ENCODE measurements at regions of chr2 and their contacts with region 1.

Region 1: DNA sequence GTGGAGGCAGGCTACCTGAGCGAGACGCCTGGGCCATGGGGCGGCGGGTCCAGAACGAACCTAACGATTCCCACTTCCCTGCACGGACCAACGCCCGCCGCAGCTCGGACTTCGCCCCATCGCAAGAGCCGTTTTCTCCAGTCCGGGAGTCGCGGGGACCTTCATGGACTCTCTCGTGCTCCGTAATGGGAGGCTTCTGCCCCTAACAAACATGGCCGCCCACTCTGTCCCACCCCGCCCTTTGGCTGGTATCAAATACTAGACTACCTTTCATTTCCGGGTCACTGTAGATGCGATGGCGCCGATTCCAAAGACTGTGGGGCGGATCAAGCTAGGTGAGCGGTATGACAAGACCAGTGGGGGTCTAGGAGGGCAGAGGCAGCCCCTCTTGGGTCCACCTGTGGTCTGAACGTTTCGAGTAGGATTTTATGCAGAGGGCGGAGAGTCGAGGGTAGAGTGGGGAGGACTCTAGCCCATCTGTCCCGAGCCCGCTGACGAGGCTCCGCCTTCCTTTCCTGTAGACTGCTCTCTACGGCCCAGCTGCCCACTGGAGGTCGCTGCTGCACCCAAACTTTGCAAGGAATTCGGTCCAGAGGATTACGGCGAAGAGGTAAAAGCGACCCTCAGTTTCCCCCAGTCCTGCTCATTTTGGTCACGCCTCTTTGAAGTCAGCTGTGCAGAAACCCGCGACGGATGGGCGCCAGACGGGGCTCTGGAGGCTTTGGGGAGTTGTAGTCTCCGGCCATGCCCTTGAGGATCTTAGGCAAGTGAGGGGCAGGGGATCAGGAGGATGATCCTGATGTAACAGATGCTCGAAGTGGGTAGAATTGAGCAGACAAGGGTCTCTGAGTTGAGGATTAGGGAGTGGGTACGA is at the starts of genes CCDC142 and TTC31:
- DNase-seq: peak; percentile 76 to 96 (median 96)
- ATAC-seq: peak; percentile 96
- H3K4me3 ChIP-seq: peak within 1 kb of the TSS; percentile 99
- H3K4me3 Mint-ChIP-seq: peak within 1 kb of the TSS; percentile 91 to 100 (median 98)
- H3K27ac ChIP-seq: peak within 1 kb of the TSS; percentile 85
- H3K27ac Mint-ChIP-seq: peak within 1 kb of the TSS; percentile 93 to 100 (median 99)
- H3K4me1 ChIP-seq: peaks cover 22 to 26% of the 10 kb centered on the region in 2 donors
- H3K4me1 Mint-ChIP-seq: peaks cover 21 to 59% (median 41%) of the 10 kb centered on the region in 7 donors
- H3K27me3 ChIP-seq: no peaks in the 10 kb centered on the region
- H3K27me3 Mint-ChIP-seq: no peaks in the 10 kb centered on the region
- total RNA-seq, gene CCDC142: 21.4 to 75.2 (median 33.8) TPM
- total RNA-seq, gene TTC31: 35.5 to 50.4 (median 43.6) TPM

Region 2: GRCh38 chr2:73759285-73759764 is 723.7 kb before region 1 on chr2:
- CTCF ChIA-PET with region 1: no interaction called
- POLR2A ChIA-PET with region 1: no interaction called
- intact Hi-C with region 1: no loop called
- DNase-seq: no peak
- ATAC-seq: no peak
- H3K4me3 ChIP-seq: no peak overlapping the region
- H3K4me3 Mint-ChIP-seq: no peak overlapping the region
- H3K27ac ChIP-seq: no peak overlapping the region
- H3K27ac Mint-ChIP-seq: peak overlapping the region in 1 of 9 donors; percentile 41
- H3K4me1 ChIP-seq: no peaks in the 10 kb centered on the region
- H3K4me1 Mint-ChIP-seq: peaks cover 0 to 4% (median 0%) of the 10 kb centered on the region in 7 donors
- H3K27me3 ChIP-seq: no peaks in the 10 kb centered on the region
- H3K27me3 Mint-ChIP-seq: no peaks in the 10 kb centered on the region

Region 3: GRCh38 chr2:74391580-74392448 is 91.2 kb before region 1 on chr2:
- CTCF ChIA-PET with region 1: no interaction called
- POLR2A ChIA-PET with region 1: interaction called, 10 read pairs
- intact Hi-C with region 1: loop called in 1 of 2 experiments (anchors 1 kb)
- DNase-seq: peak; percentile 89 to 99 (median 93)
- ATAC-seq: peak; percentile 97
- H3K4me3 ChIP-seq: peak overlapping the region; percentile 78
- H3K4me3 Mint-ChIP-seq: peak overlapping the region in 4 of 10 donors; percentile 40 to 100 (median 92)
- H3K27ac ChIP-seq: peak overlapping the region; percentile 91
- H3K27ac Mint-ChIP-seq: peak overlapping the region in 8 of 9 donors; percentile 98 to 100 (median 99)
- H3K4me1 ChIP-seq: peaks cover 8 to 25% of the 10 kb centered on the region in 2 donors
- H3K4me1 Mint-ChIP-seq: peaks cover 0 to 15% (median 5%) of the 10 kb centered on the region in 7 donors
- H3K27me3 ChIP-seq: no peaks in the 10 kb centered on the region
- H3K27me3 Mint-ChIP-seq: peaks cover 0 to 14% (median 5%) of the 10 kb centered on the region in 5 donors

Region 4: GRCh38 chr2:74472086-74472944 is 10.7 kb before region 1 on chr2 and contains the start of gene MRPL53:
- CTCF ChIA-PET with region 1: interaction called, 15 read pairs
- POLR2A ChIA-PET with region 1: interaction called, 80 read pairs
- intact Hi-C with region 1: loop called (anchors 1 kb)
- DNase-seq: peak; percentile 91 to 98 (median 95)
- ATAC-seq: peak; percentile 96
- H3K4me3 ChIP-seq: peak within 1 kb of the TSS; percentile 89
- H3K4me3 Mint-ChIP-seq: peak within 1 kb of the TSS; percentile 88 to 99 (median 98)
- H3K27ac ChIP-seq: peak within 1 kb of the TSS; percentile 91
- H3K27ac Mint-ChIP-seq: peak within 1 kb of the TSS; percentile 94 to 99 (median 98)
- H3K4me1 ChIP-seq: peaks cover 14 to 19% of the 10 kb centered on the region in 2 donors
- H3K4me1 Mint-ChIP-seq: peaks cover 9 to 32% (median 29%) of the 10 kb centered on the region in 7 donors
- H3K27me3 ChIP-seq: no peaks in the 10 kb centered on the region
- H3K27me3 Mint-ChIP-seq: no peaks in the 10 kb centered on the region
- total RNA-seq, gene MRPL53: 45.7 to 108 (median 94.5) TPM

Region 5: GRCh38 chr2:74544634-74545033 is 61.6 kb after region 1 on chr2:
- CTCF ChIA-PET with region 1: no interaction called
- POLR2A ChIA-PET with region 1: no interaction called
- intact Hi-C with region 1: loop called in 1 of 2 experiments (anchors 1 kb)
- DNase-seq: peak in 1 of 9 donors; percentile 14
- ATAC-seq: no peak
- H3K4me3 ChIP-seq: no peak overlapping the region
- H3K4me3 Mint-ChIP-seq: no peak overlapping the region
- H3K27ac ChIP-seq: no peak overlapping the region
- H3K27ac Mint-ChIP-seq: no peak overlapping the region
- H3K4me1 ChIP-seq: peaks cover 0 to 12% of the 10 kb centered on the region in 2 donors
- H3K4me1 Mint-ChIP-seq: peaks cover 5 to 11% (median 9%) of the 10 kb centered on the region in 7 donors
- H3K27me3 ChIP-seq: peaks cover 9 to 18% of the 10 kb centered on the region in 2 donors
- H3K27me3 Mint-ChIP-seq: peaks cover 39 to 62% (median 52%) of the 10 kb centered on the region in 5 donors

Region 6: GRCh38 chr2:74653985-74654882 is 171.2 kb after region 1 on chr2 and contains the start of gene SEMA4F:
- CTCF ChIA-PET with region 1: no interaction called
- POLR2A ChIA-PET with region 1: no interaction called
- intact Hi-C with region 1: loop called in 1 of 2 experiments (anchors 2 kb)
- DNase-seq: peak; percentile 85 to 95 (median 92)
- ATAC-seq: peak; percentile 100
- H3K4me3 ChIP-seq: peak within 1 kb of the TSS; percentile 86
- H3K4me3 Mint-ChIP-seq: peak within 1 kb of the TSS; percentile 82 to 97 (median 90)
- H3K27ac ChIP-seq: peak within 1 kb of the TSS; percentile 75
- H3K27ac Mint-ChIP-seq: peak within 1 kb of the TSS in 8 of 9 donors; percentile 59 to 96 (median 85)
- H3K4me1 ChIP-seq: peaks cover 6 to 8% of the 10 kb centered on the region in 2 donors
- H3K4me1 Mint-ChIP-seq: peaks cover 12 to 34% (median 23%) of the 10 kb centered on the region in 7 donors
- H3K27me3 ChIP-seq: no peaks in the 10 kb centered on the region
- H3K27me3 Mint-ChIP-seq: peaks cover 3 to 21% (median 5%) of the 10 kb centered on the region in 5 donors
- total RNA-seq, gene SEMA4F: 5.7 to 23.6 (median 11.0) TPM